ENCODE measurements at regions of chr22 and their contacts with region 1.

Region 1: DNA sequence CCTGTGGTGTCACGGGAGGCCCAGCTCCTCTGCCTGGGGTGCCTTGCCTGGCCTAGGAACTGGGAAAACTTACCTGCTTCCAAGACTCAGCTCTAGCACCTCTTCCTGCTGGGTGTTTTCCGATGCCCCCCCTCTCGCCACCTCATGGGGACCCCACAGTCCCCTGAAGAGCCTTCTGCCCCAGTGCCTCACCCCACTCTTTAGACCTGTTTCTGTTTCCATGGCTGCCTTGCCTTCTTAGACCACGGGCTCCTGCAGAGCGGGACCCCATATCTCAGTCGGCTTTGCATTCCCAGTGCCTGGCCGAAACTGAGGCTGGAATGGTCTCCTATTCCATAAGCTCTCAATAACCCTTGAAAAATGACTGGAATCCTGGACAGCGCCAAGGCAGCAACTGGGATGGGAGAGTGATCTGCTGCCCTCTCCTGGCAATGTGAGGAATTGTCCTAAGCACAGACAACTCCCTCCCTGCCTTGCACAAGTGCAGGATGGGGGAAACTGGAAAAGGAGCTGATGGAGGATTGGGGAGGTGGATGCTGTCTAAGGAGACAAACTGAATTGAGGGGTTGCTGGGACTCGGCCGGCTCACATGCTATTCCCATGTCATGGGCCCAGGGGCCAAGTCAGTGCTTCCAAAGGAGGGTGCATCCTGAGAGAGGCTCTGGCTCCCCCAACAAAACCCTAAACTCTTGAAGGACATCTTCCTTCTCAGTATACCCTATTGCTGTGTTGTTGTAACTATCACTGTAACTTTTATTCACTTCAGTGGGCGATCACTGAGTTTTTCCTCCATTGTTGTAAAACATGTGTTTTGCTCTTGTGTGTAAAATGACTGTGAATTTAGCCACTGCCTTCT is 26.6 kb upstream of the IL17RA start:
- DNase-seq: peak; percentile 69 to 77
- H3K4me3 ChIP-seq: no peak overlapping the region
- H3K4me3 Mint-ChIP-seq: no peak overlapping the region
- H3K27ac Mint-ChIP-seq: peak overlapping the region; percentile 4
- H3K4me1 ChIP-seq: no peaks in the 10 kb centered on the region
- H3K4me1 Mint-ChIP-seq: no peaks in the 10 kb centered on the region
- H3K27me3 ChIP-seq: no peaks in the 10 kb centered on the region
- H3K27me3 Mint-ChIP-seq: no peaks in the 10 kb centered on the region
- CTCF ChIP-seq: peak; percentile 89 to 92

Region 2: DNA sequence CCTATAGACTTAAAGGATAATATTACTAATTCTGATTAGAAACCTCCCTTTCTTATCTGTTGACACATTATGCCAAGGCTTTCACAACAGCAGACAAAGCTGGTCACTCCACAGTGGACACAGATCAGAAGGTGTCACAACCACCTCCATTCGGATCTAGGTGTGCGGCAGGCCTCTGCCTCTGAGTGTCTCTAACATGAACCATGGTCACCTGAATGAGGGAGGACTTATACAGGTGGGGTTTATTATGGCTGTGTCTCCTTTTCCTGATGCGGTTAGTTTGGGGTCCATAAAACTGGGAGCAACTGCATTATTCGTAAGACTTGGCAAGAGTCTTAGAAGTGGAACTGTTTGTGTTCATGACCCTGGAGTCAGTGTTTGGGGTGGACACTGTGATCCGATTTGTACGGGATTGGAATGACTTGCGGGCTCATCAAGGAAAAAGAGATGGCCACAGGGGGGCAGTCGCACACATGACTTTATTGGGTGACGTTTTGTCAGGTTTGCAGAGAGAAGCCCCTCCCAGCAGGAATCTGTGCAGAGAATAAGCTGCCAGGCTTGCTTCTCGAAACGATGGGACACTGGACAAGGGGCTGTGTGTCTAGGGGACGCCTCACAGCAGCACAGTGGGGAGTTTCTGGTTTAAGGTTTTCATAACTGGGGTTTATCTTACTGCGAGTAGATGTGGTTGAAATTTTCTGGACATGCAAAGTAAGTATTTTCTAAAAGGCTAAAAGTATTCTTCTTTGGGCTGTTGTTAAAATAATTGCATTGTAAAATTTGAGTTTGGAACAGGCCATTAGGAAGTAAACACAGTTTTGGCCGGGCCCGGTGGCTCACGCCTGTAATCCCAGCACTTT is 140.8 kb before region 1 on chr22:
- CTCF ChIA-PET with region 1: interaction called, 18 read pairs
- POLR2A ChIA-PET with region 1: no interaction called
- intact Hi-C with region 1: loop called (anchors 1 kb)
- DNase-seq: peak; percentile 75 to 77
- H3K4me3 ChIP-seq: no peak overlapping the region
- H3K4me3 Mint-ChIP-seq: no peak overlapping the region
- H3K27ac Mint-ChIP-seq: no peak overlapping the region
- H3K4me1 ChIP-seq: no peaks in the 10 kb centered on the region
- H3K4me1 Mint-ChIP-seq: no peaks in the 10 kb centered on the region
- H3K27me3 ChIP-seq: no peaks in the 10 kb centered on the region; the same call in 1 of the 2 replicates
- H3K27me3 Mint-ChIP-seq: peaks cover 10% of the 10 kb centered on the region
- CTCF ChIP-seq: peak; percentile 68 to 80

Region 3: GRCh38 chr22:16932577-16932976 is 125.6 kb before region 1 on chr22:
- CTCF ChIA-PET with region 1: interaction called, 14 read pairs
- POLR2A ChIA-PET with region 1: no interaction called
- intact Hi-C with region 1: loop called (anchors 1 kb)
- DNase-seq: peak in 1 of 2 experiments; percentile 23
- H3K4me3 ChIP-seq: no peak overlapping the region
- H3K4me3 Mint-ChIP-seq: no peak overlapping the region
- H3K27ac Mint-ChIP-seq: no peak overlapping the region
- H3K4me1 ChIP-seq: no peaks in the 10 kb centered on the region
- H3K4me1 Mint-ChIP-seq: no peaks in the 10 kb centered on the region
- H3K27me3 ChIP-seq: no peaks in the 10 kb centered on the region
- H3K27me3 Mint-ChIP-seq: peaks cover 35% of the 10 kb centered on the region
- CTCF ChIP-seq: peak in 1 of 2 experiments; percentile 43

Region 4: GRCh38 chr22:17074648-17075002 is 16.4 kb after region 1 on chr22:
- CTCF ChIA-PET with region 1: no interaction called
- POLR2A ChIA-PET with region 1: no interaction called
- intact Hi-C with region 1: no loop called
- DNase-seq: no peak
- H3K4me3 ChIP-seq: no peak overlapping the region
- H3K4me3 Mint-ChIP-seq: no peak overlapping the region
- H3K27ac Mint-ChIP-seq: no peak overlapping the region
- H3K4me1 ChIP-seq: no peaks in the 10 kb centered on the region
- H3K4me1 Mint-ChIP-seq: no peaks in the 10 kb centered on the region
- H3K27me3 ChIP-seq: no peaks in the 10 kb centered on the region
- H3K27me3 Mint-ChIP-seq: peaks cover 4% of the 10 kb centered on the region
- CTCF ChIP-seq: no peak